ENCODE measurements at regions of chr2 and their contacts with region 1.

Region 1: GRCh38 chr2:3738454-3738853 is 35.1 kb downstream of the DCDC2C start:
- DNase-seq: peak in 2 of 4 experiments; percentile 60 to 62
- ATAC-seq: peak; percentile 93
- H3K4me3 ChIP-seq: no peak overlapping the region
- H3K27ac ChIP-seq: no peak overlapping the region
- H3K4me1 ChIP-seq: no peaks in the 10 kb centered on the region
- H3K27me3 ChIP-seq: peaks cover 0 to 18% of the 10 kb centered on the region in 2 experiments; a peak in 4 of 5 replicates
- CTCF ChIP-seq: peak; percentile 41 to 62 (median 44); a peak in 3 of 6 replicates
- EP300 ChIP-seq: no peak
- POLR2A ChIP-seq: no peak
- RAD21 ChIP-seq: no peak

Region 2: DNA sequence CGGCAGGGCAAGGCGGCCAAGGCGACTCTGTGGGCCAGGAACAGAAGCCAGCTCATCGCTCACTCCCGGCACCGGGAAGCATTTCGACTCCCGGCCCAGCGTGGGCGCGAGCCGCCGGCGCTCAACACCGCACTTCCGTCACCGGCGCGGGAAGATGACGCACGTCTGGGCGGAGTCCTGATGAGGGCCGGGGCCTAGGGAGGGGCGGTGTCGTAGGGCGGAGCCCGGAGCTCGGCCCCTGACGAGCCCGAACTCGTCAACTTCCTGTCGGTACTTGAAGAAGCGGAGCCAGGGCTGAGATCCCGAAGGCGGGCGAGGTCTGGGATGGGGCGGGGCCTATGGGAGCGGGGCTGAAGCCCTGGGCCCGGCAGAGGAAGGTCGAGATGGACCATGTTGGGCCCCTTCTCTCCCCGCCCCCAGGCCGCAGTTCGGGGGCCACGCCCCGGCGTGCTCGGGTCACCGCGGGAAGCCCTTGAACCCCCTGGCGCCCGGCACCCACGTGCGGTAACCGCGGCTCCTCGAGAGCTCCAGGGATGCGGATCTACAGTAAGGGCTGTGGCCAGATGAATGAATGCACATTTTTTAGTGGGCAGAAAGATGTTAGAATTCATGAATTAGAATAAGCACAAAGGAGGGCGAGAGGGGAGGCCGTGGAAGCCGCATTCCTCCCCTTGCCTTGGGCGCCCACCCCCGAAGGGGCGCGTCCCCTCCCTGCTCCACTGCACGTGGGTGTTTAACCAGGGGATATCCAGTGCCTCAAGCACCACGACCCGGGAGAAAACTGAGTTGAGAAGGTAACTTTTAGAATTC is 180.0 kb before region 1 on chr2 and contains the start of gene RNASEH1:
- CTCF ChIA-PET with region 1: no interaction called
- POLR2A ChIA-PET with region 1: no interaction called
- in situ Hi-C with region 1: no loop called
- intact Hi-C with region 1: no loop called
- DNase-seq: peak; percentile 98 to 99 (median 98)
- ATAC-seq: peak; percentile 99
- H3K4me3 ChIP-seq: peak within 1 kb of the TSS; percentile 99
- H3K27ac ChIP-seq: peak within 1 kb of the TSS; percentile 89
- H3K4me1 ChIP-seq: peaks cover 16 to 20% of the 10 kb centered on the region in 2 experiments; a peak in 4 of 5 replicates
- H3K27me3 ChIP-seq: no peaks in the 10 kb centered on the region
- CTCF ChIP-seq: no peak
- EP300 ChIP-seq: no peak; the same call in 1 of the 2 replicates
- POLR2A ChIP-seq: peak; percentile 95
- RAD21 ChIP-seq: peak in 1 of 2 experiments; percentile 15; a peak in 1 of 4 replicates
- polyA plus RNA-seq, gene RNASEH1: 27.5 to 32.7 TPM

Region 3: GRCh38 chr2:3780477-3781402 is 42.3 kb after region 1 on chr2:
- CTCF ChIA-PET with region 1: no interaction called
- POLR2A ChIA-PET with region 1: no interaction called
- in situ Hi-C with region 1: no loop called
- intact Hi-C with region 1: loop called (anchors 2 kb)
- DNase-seq: peak; percentile 40 to 73 (median 56)
- ATAC-seq: peak; percentile 99
- H3K4me3 ChIP-seq: no peak overlapping the region
- H3K27ac ChIP-seq: no peak overlapping the region
- H3K4me1 ChIP-seq: no peaks in the 10 kb centered on the region
- H3K27me3 ChIP-seq: peaks cover 10 to 31% of the 10 kb centered on the region in 2 experiments; a peak in 4 of 5 replicates
- CTCF ChIP-seq: peak; percentile 68 to 82 (median 78)
- EP300 ChIP-seq: no peak
- POLR2A ChIP-seq: no peak
- RAD21 ChIP-seq: peak; percentile 27 to 66; a peak in 2 of 4 replicates

Region 4: GRCh38 chr2:3805201-3805939 is 66.9 kb after region 1 on chr2:
- CTCF ChIA-PET with region 1: no interaction called
- POLR2A ChIA-PET with region 1: no interaction called
- in situ Hi-C with region 1: no loop called
- intact Hi-C with region 1: loop called (anchors 2 kb)
- DNase-seq: peak; percentile 27 to 48 (median 34)
- ATAC-seq: peak; percentile 91
- H3K4me3 ChIP-seq: no peak overlapping the region
- H3K27ac ChIP-seq: no peak overlapping the region
- H3K4me1 ChIP-seq: no peaks in the 10 kb centered on the region
- H3K27me3 ChIP-seq: no peaks in the 10 kb centered on the region
- CTCF ChIP-seq: peak; percentile 43 to 62 (median 51)
- EP300 ChIP-seq: no peak
- POLR2A ChIP-seq: no peak
- RAD21 ChIP-seq: peak in 1 of 2 experiments; percentile 35; a peak in 2 of 4 replicates

Region 5: DNA sequence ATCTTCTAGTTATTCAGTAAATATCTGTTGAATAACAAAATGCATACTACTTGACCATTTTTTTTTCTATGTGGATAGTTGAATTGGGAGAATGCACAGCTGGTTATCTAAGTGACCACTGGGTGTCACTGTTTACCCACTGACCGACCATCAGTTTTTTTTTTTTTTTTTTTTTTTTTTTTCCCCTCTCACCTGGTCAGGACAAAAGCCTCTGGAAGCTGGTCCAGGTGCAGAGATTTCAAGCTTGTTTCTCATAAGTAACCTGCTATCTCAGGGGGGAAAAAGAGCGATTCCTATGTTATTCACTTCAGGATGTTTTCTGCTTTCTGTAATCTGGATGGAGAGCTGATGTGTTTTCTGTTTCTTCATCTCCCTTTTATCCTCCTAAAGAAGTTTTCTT is 220.9 kb after region 1 on chr2:
- CTCF ChIA-PET with region 1: no interaction called
- POLR2A ChIA-PET with region 1: no interaction called
- in situ Hi-C with region 1: no loop called
- intact Hi-C with region 1: loop called (anchors 5 kb)
- DNase-seq: peak; percentile 33 to 50 (median 45)
- ATAC-seq: peak; percentile 44; the same call in 2 of the 3 replicates
- H3K4me3 ChIP-seq: no peak overlapping the region
- H3K27ac ChIP-seq: no peak overlapping the region
- H3K4me1 ChIP-seq: no peaks in the 10 kb centered on the region
- H3K27me3 ChIP-seq: no peaks in the 10 kb centered on the region
- CTCF ChIP-seq: peak; percentile 32 to 80 (median 67); a peak in 5 of 6 replicates
- EP300 ChIP-seq: no peak
- POLR2A ChIP-seq: no peak
- RAD21 ChIP-seq: peak; percentile 52 to 53

Region 6: DNA sequence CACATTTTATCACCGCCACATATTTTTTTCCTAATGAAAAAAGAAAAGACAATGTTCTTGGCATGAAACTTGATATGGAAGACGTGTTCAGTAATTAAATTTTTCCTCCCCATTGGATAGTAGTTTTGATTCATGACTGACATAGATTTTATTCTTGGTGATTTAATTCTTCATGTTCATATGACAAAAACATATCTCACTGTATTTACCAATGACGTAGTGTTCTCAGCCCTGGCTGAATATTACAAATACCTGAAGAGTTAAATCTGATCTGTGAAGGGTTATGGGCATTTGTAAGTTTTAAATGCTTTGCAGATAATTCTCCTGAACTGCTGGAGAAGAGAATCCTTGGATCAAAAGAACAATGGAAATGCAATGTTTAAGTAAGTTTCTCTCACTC is 425.8 kb after region 1 on chr2:
- CTCF ChIA-PET with region 1: no interaction called
- POLR2A ChIA-PET with region 1: no interaction called
- in situ Hi-C with region 1: no loop called
- intact Hi-C with region 1: no loop called
- DNase-seq: no peak
- ATAC-seq: no peak
- H3K4me3 ChIP-seq: no peak overlapping the region
- H3K27ac ChIP-seq: no peak overlapping the region
- H3K4me1 ChIP-seq: no peaks in the 10 kb centered on the region
- H3K27me3 ChIP-seq: no peaks in the 10 kb centered on the region
- CTCF ChIP-seq: no peak
- EP300 ChIP-seq: no peak
- POLR2A ChIP-seq: no peak
- RAD21 ChIP-seq: no peak